BJ (cell line): ENCODE measurements at regions of chr12 and their contacts with region 1.

Region 1: DNA sequence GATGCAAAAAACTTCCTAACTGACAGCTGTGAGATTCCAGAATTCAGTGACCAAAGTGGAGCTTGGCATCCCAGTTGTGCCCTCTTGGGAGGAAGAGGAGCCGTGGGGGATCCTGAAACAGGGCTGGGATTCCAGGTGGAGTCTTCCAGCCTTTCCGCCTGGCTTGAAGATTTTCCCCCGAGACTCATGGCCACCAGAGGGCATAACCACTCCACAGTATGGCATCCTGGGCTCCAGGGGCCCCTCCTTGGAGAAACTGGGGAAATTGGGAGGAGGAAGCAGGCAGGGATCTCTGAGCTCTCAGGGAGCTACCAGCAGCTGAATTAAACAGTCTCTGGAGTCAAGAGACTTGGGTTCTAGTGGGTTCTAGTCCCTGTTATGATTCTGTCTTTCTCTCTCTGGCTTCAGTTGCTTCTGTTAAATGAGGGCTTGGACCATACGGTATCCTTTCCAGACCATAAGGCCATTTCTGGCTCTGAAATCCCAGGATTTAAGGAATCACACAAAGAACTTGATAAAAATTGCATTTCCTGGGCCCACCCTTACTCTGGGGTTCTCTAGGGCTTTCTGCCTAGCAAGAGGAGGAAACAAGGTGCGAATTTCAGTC is 2.6 kb upstream of the TAMALIN start:
- DNase-seq: no peak
- H3K4me3 ChIP-seq: no peak overlapping the region
- H3K27me3 ChIP-seq: peaks cover 6% of the 10 kb centered on the region; the same call in 1 of the 2 replicates
- CTCF ChIP-seq: peak; percentile 85

Region 2: DNA sequence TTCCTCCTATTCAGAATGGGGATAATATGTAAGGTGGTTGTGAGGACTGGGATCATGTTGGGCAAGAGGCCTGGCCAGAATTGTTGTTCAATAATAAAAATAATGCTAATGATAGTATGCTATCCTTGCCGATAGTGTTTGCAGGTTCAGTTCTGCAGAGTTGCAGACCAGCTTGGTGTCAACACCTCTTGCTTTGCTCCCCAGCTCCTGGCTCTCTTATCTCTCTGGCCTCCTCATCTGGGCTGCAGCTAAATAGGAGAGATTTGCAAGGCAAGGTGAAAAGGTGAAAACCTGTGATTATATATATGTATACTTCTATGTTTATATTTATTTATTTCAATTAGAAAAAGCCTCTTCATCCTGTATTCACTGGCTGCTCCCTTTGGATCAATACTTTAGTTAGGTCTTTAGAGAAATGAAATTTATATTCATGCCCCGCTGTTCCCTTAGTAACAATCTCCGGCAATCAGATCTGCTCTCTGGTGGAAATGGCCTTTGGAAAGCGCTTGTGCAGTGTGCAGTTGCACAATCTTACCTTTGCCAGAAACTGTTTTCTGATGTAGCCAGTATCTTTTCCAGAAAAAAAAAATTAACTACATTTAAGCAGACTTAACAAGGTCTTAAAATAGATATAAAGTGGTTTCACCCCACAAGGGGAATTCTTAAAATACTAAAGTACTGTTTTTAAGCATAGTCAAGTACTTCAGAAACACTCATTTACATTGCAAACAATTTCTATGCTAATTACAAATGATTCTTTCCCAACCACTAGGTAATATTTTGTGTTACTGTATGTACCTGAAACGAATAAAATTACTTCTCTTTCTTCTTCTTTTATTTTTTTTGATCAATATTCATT is 71.7 kb before region 1 on chr12:
- CTCF ChIA-PET with region 1: no interaction called
- POLR2A ChIA-PET with region 1: no interaction called
- DNase-seq: no peak
- H3K4me3 ChIP-seq: no peak overlapping the region
- H3K27me3 ChIP-seq: peaks cover 4% of the 10 kb centered on the region; the same call in 1 of the 2 replicates
- CTCF ChIP-seq: no peak

Region 3: DNA sequence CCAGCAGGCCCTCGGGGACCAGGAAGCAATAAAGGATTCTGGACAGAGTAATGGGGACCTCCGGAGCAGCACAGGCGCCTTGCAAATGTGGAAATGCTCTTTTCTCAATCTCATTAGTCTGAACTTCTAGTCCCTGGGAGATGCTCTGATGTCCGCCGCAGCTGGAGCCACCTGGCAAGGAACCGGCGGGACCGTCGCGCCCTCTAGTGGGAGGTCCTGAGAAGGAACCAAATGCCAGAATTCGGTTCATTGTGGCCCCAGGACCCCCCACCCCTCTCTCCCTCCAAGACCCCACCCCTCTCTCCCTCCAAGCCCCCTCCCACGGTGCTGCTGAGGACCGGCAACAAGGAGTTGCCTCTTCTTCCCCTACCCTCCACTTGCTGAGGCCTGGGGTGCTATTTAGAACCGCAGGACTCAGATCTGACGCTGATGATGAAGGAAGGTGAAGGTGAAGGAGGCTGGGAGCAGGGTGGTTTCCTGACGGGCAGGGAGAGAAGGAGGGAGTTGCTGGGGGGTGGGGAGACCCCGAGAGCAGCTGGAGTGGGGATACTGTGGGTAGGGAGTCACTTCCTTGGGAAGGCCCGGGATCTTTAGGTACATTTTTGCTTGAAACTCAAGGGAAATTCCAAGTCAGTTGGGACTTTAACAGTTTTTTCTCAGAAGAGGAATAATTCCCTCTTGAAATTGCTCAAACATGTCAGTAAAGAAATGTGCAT is 117.8 kb after region 1 on chr12:
- CTCF ChIA-PET with region 1: interaction called, 33 read pairs
- POLR2A ChIA-PET with region 1: no interaction called
- DNase-seq: no peak
- H3K4me3 ChIP-seq: no peak overlapping the region
- H3K27me3 ChIP-seq: peaks cover 2% of the 10 kb centered on the region
- CTCF ChIP-seq: peak; percentile 83